ENCODE measurements at regions of chr1 and their contacts with region 1.

Region 1: DNA sequence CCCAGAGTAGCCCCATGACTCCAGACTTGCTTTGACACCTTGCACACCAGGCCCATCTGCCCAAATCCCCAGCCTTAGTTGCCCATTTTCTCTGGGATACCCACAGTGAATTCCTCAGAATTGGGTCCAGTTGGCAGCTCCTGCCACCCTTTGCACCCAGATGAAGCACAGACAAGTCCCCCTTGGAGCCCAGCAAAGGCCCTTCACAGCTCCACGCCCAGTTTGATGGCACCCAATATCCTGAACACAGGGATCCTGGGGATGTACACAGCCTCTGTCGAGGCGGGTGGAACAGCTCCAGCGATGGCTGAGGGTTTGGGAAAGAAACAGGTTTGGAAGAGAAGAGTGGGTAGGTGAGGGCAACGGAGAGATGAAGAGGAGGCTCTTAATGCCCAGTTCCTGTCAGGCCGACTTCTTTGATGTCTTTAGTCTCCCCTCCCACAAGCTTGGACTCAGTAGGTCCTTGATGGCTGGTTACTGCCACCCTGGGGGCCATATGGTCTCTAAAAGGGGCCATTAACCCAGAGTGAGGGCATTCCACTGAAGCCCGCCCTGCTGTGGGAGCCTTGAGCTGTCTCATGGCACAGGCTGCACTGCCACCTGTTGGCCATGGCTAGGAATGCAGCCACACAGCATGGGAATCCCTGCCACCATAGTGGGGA is 21.7 kb downstream of the TMEM53 start:
- DNase-seq: peak; percentile 87
- H3K4me3 ChIP-seq: no peak overlapping the region
- H3K27ac ChIP-seq: peak overlapping the region in 3 of 4 donors; percentile 18 to 34 (median 33)
- H3K4me1 ChIP-seq: peaks cover 0 to 16% (median 4%) of the 10 kb centered on the region in 4 donors
- H3K27me3 ChIP-seq: no peaks in the 10 kb centered on the region
- CTCF ChIP-seq: peak; percentile 92 to 98 (median 92)
- EP300 ChIP-seq: no peak
- POLR2A ChIP-seq: no peak

Region 2: DNA sequence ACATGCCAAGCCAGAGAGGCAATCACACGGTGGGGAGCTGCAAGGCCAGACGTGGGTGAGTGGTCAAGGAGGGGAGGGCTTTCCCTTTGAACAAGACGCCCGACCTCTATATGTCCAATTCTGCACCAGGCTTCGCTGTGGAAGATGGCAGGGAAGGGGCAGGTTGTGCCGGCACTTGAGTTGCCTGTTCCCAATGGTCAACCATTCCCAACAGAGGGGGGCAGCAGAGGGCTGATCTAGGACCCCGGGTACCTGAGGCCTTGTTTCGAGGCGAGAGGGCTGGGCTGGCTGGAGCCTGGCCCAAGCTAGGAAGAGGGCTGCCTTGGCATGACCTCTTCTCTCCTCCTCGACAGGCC is 43.2 kb before region 1 on chr1:
- intact Hi-C with region 1: loop called (anchors 1 kb)
- DNase-seq: peak; percentile 84
- H3K4me3 ChIP-seq: no peak overlapping the region
- H3K27ac ChIP-seq: no peak overlapping the region
- H3K4me1 ChIP-seq: peaks cover 0 to 5% (median 0%) of the 10 kb centered on the region in 4 donors
- H3K27me3 ChIP-seq: no peaks in the 10 kb centered on the region
- CTCF ChIP-seq: peak; percentile 36 to 81 (median 66)
- EP300 ChIP-seq: no peak
- POLR2A ChIP-seq: no peak

Region 3: DNA sequence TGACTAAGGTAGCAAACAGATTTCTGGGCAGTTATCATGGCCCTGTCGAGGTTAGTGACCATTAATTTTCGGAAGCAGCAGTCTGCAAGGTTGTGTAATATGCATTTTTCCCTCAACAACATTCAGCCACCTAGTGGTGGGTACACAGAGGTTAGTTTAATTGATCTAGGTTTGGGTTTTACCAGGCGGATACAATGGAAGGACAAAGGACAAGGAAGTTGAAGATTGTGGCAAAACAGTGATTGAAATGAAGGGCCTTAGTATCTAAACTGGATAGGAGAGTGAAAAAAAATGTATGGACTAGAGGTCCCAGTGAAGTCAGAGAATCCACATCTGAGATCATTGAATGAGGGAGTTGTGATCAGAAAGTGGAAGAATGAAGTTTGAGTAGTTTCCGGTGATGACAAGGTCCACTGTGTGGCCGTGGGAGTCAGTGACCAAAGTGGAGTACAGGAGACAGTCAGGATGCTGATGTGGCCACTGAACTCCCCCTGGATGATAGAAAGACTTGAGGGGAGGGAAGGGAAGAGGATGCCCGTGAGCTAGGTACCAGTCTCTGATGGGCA is 24.7 kb after region 1 on chr1:
- intact Hi-C with region 1: no loop called
- DNase-seq: no peak
- H3K4me3 ChIP-seq: no peak overlapping the region
- H3K27ac ChIP-seq: peak overlapping the region in 2 of 4 donors; percentile 24 to 44
- H3K4me1 ChIP-seq: peaks cover 0 to 27% (median 21%) of the 10 kb centered on the region in 4 donors
- H3K27me3 ChIP-seq: no peaks in the 10 kb centered on the region
- CTCF ChIP-seq: no peak
- EP300 ChIP-seq: no peak
- POLR2A ChIP-seq: no peak

Measured in sigmoid colon (tissue), 7 donors.